Common myeloid progenitor, CD34-positive (primary cell): ENCODE measurements at regions of chr17 and their contacts with region 1.

Region 1: GRCh38 chr17:8041249-8041928 is 2.5 kb downstream of the ALOX15B start:
- DNase-seq: peak; percentile 76 to 88 (median 84)
- H3K4me3 ChIP-seq: no peak overlapping the region
- H3K27ac ChIP-seq: no peak overlapping the region
- H3K4me1 ChIP-seq: peaks cover 0 to 27% (median 23%) of the 10 kb centered on the region in 4 experiments
- H3K27me3 ChIP-seq: no peaks in the 10 kb centered on the region

Region 2: DNA sequence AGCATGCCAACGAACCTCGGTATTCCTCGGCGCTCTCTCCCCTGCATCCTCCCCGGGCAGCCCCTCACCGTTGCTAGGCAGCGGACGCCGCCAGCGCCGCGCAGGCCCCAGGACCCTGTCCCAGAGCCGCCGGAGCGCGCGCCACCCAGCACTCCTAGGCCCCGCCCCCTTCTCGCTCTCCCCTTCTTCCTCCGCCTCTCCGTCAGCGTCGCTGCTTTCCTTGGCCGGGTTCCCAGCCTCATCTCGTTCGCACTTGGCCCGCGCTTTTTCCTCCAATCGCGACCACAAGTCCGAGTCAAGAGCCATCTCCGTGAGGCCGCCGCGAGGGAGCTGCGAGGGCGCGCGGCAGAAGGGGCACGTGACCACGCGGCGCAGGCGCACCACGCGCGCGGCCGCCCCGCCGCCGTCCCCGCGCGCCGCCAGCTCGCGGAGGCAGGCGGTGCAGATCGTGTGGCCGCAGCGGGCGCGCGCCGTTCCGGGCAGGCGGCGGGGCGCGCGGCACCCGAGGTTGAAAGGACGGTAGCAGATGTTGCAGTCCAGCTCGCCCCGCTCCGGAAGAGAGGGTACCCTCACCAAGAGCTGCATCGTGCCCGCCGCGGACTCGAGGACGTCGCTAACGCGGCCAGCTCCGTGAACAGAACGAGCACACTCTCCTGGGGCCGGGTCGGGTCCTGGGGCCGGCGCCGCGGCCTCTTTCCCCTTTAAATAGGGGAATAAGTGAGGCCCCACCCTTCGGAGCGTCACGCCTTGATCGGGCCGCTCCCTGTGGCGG is 125.6 kb before region 1 on chr17 and contains the start of gene RNF227:
- CTCF ChIA-PET with region 1: interaction called, 31 read pairs
- POLR2A ChIA-PET with region 1: interaction called, 7 read pairs
- DNase-seq: peak; percentile 93 to 96 (median 96)
- H3K4me3 ChIP-seq: peak within 1 kb of the TSS; percentile 11 to 80 (median 48)
- H3K27ac ChIP-seq: peak within 1 kb of the TSS in 1 of 2 experiments; percentile 36
- H3K4me1 ChIP-seq: peaks cover 0 to 27% (median 22%) of the 10 kb centered on the region in 4 experiments
- H3K27me3 ChIP-seq: peaks cover 0 to 3% (median 0%) of the 10 kb centered on the region in 5 experiments

Region 3: GRCh38 chr17:7989781-7990655 is 51.4 kb before region 1 on chr17:
- CTCF ChIA-PET with region 1: interaction called, 36 read pairs
- POLR2A ChIA-PET with region 1: interaction called, 4 read pairs
- DNase-seq: peak; percentile 80 to 87 (median 86)
- H3K4me3 ChIP-seq: peak overlapping the region; percentile 35 to 78 (median 60)
- H3K27ac ChIP-seq: no peak overlapping the region
- H3K4me1 ChIP-seq: peaks cover 4 to 27% (median 16%) of the 10 kb centered on the region in 4 experiments
- H3K27me3 ChIP-seq: no peaks in the 10 kb centered on the region

Region 4: DNA sequence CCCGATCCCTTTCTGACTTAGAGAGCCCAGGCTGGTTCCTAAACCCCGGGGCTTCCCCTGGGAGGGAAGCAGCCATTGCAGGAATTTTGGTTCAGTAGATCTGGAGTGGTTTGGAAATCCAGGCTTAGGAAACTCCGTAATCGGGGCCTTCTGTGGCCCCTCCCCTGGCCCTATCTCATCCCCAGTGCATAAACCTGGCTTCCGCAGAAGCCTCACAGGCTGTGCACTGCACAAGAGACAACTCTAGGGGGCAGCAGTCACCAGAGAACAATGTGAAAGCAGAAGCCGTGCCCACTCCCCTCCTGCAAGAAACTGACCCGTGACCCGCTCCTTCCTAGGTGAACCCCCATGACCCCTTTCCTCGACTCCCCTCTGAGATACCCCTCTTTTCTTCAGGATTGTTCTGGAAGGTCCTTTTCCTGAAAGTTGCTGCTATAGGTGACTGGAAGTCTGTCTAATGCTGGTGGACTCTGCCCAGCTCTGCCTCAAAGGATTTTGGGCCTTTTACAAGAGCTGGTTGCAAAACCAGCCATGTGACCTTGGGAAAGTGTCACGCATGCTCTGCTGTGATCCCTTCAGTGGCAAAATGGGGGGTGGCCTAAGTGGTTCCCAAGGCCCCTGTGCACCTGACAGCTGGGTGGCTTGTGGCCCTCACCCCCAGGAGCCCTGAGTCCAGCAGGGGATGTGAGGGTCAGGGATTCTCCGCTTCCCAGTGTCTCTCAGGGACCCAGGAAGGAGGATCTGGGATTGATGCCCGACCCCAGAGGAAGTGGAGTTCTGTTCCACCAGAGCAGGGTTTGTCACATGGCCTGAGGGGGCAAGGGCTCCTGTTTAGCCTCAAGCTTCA is 24.5 kb before region 1 on chr17:
- CTCF ChIA-PET with region 1: interaction called, 117 read pairs
- POLR2A ChIA-PET with region 1: no interaction called
- DNase-seq: peak in 2 of 3 donors; percentile 77 to 78
- H3K4me3 ChIP-seq: peak overlapping the region; percentile 11 to 77 (median 65)
- H3K27ac ChIP-seq: no peak overlapping the region
- H3K4me1 ChIP-seq: peaks cover 7 to 65% (median 61%) of the 10 kb centered on the region in 4 experiments
- H3K27me3 ChIP-seq: peaks cover 0 to 3% (median 0%) of the 10 kb centered on the region in 5 experiments

Region 5: DNA sequence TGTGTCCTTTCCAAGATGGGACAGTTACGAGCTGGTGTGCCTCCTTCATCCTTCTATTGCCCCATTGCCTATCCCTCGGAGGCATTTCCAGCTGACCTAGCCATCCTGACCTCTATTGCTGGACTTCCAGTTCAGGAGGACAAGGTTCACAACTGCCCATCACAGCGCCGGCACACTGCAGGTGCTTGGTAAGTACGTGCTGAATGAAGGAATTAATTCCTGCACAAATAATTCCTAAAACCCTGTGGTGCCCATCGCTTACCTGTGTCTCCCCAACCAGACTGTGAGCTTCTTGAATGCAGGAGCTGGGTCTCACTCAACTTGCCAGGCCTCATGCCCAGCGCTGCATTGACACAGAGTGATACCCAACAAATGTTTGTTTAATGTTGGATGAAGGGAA is 10.4 kb after region 1 on chr17:
- CTCF ChIA-PET with region 1: interaction called, 48 read pairs
- POLR2A ChIA-PET with region 1: no interaction called
- DNase-seq: no peak
- H3K4me3 ChIP-seq: no peak overlapping the region
- H3K27ac ChIP-seq: no peak overlapping the region
- H3K4me1 ChIP-seq: peaks cover 12 to 24% (median 20%) of the 10 kb centered on the region in 4 experiments
- H3K27me3 ChIP-seq: no peaks in the 10 kb centered on the region

Region 6: DNA sequence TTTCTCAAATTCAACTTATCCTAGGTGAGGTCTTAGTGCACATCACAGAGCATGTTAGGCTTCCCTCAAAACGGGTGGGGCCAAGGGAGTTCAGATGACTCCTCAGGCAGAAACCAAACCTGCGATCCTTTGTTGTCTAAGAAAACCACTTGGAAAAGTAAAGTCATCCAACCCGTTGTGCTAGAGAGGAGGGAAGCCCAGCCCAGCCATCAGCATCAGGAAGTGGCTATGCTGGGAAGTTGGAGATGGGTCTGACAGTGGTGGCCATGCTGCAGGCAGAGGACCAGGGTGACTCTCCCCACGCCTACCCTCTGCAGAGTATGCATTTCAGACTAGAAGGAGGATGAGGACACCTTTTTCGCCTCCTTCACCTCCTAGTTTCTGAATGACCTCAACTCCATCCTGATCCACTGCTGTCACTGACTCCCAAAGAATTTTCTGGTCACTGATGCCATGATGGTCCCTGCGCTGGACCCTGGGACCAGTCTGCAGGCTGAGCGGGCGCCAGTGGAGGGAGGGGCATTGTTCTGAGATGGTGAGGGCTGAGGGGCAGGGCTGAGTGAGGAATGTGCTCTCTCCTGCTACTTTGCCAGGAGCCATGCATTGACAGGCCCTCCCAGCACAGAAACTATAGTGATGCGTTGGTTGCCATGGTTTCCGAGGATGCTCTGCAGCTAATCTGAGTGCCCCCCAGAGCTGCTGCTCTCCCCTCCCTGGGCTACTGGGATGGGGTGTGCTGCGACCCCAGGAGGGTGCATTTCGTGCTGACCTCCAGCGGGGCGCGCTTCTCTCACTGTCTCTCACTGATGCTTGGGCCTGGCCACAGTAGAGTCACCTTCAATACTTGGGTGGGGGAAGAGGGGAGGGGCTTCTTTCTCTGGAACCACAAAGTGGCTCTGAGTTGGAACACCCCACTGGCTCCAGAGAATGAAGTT is 25.7 kb after region 1 on chr17:
- CTCF ChIA-PET with region 1: no interaction called
- POLR2A ChIA-PET with region 1: no interaction called
- DNase-seq: no peak
- H3K4me3 ChIP-seq: no peak overlapping the region
- H3K27ac ChIP-seq: no peak overlapping the region
- H3K4me1 ChIP-seq: peaks cover 0 to 14% (median 5%) of the 10 kb centered on the region in 4 experiments
- H3K27me3 ChIP-seq: peaks cover 0 to 46% (median 27%) of the 10 kb centered on the region in 5 experiments